CD8-positive, alpha-beta memory T cell (primary cell): ENCODE measurements at regions of chr3 and their contacts with region 1.

Region 1: DNA sequence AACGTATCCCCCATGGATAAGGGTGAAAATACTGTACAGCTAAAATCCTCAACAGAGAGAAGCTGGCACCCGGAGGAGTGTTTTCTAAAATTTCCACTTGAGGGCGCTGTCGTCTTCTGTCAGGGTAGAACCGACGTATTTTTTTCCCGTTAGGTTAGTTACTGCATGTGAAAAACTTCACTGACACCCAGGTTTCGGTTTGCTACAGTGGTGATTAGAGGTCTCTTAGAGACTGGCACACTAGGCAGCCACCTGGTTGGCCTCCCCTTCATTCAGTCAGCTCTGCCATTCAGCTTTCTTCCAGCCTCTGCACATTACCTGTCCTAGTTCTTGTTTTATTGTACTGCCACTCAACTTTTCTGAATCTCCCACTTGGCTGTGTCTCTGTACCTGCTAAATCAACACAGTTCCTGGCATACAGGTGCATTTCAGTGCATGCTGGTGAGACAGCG is 18.4 kb downstream of the CCK start:
- DNase-seq: peak in 4 of 5 donors; percentile 16 to 68 (median 60)
- H3K4me3 ChIP-seq: no peak overlapping the region
- H3K4me3 Mint-ChIP-seq: peak overlapping the region in 5 of 7 donors; percentile 16 to 82 (median 27)
- H3K27ac ChIP-seq: no peak overlapping the region
- H3K27ac Mint-ChIP-seq: peak overlapping the region in 2 of 8 donors; percentile 15 to 24
- H3K4me1 ChIP-seq: no peaks in the 10 kb centered on the region
- H3K4me1 Mint-ChIP-seq: peaks cover 8 to 11% (median 10%) of the 10 kb centered on the region in 3 donors
- H3K27me3 ChIP-seq: no peaks in the 10 kb centered on the region
- H3K27me3 Mint-ChIP-seq: peaks cover 10 to 16% of the 10 kb centered on the region in 2 donors

Region 2: DNA sequence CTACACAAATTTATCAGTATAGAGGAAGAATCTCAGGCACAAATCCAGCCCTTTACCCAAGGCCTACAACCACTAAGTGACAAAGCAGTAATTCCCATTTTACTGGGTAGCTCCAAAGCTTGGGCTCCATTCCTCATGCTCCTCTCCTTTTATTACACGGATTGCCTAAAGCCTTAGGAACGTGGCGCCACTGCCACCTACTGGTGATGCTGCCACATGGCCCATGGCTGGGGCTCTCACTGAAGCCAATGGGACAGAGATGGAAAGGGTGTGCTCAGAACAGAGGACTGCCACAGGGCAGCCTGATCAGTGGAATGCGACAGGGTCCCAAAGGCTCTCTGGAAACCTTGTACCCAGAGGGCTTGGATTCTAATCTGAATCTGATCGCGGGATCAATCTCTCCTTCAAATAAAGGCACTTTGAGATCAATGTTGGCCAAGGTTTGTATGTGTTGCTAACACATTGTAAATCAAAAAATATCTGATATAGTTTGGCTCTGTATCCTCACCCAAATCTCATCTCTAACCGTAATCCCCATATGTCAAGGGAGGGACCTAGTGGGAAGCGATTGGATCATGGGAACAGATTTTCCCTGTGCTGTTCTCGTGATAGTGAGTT is 196.3 kb after region 1 on chr3:
- CTCF ChIA-PET with region 1: interaction called, 27 read pairs
- POLR2A ChIA-PET with region 1: no interaction called
- DNase-seq: peak; percentile 41 to 79 (median 54)
- H3K4me3 ChIP-seq: no peak overlapping the region
- H3K4me3 Mint-ChIP-seq: no peak overlapping the region
- H3K27ac ChIP-seq: no peak overlapping the region
- H3K27ac Mint-ChIP-seq: no peak overlapping the region
- H3K4me1 ChIP-seq: no peaks in the 10 kb centered on the region
- H3K4me1 Mint-ChIP-seq: no peaks in the 10 kb centered on the region
- H3K27me3 ChIP-seq: no peaks in the 10 kb centered on the region
- H3K27me3 Mint-ChIP-seq: peaks cover 10 to 15% of the 10 kb centered on the region in 2 donors